ENCODE measurements at regions of chr7 and their contacts with region 1.

Region 1: DNA sequence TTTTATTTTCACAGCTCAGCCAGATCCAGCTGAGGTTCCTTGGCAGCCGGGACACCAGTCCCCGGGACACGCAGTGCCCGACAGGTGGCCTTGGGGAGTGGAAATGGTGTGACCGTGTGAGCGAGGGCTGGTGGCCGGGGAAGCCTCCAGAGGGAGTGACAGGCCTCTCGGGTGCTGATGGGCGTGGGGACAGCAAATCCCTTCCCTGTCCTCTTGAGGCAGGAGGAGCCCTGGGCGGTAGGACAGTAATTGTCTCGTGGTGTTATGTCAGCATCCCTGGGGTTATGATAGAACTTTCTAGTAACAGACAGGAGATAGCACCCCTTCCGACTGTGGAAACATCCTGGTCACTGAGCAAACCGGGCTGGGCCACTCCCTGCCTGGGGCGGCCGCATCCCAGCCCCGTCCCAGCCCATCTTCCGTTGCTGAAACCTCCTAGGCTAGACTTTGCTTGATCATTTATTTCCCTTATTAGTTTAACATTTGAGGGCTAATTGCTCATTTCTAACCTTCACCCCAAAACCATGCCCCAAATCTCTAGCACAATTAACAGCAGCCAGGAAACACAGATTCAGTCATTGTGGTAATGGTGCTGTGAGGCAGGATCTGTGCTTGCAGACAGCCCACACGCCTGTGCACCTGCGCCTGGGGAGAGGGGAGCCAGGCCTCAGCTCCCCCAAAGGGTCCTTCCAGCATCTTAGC is 63.3 kb downstream of the ELFN1 start:
- DNase-seq: no peak
- H3K4me3 ChIP-seq: no peak overlapping the region
- H3K27ac ChIP-seq: no peak overlapping the region
- H3K4me1 ChIP-seq: no peaks in the 10 kb centered on the region
- H3K27me3 ChIP-seq: peaks cover 4% of the 10 kb centered on the region
- CTCF ChIP-seq: no peak

Region 2: GRCh38 chr7:1593091-1593866 is 140.1 kb before region 1 on chr7:
- CTCF ChIA-PET with region 1: no interaction called
- dilution Hi-C with region 1: loop called (anchors 10 kb)
- in situ Hi-C with region 1: no loop called
- intact Hi-C with region 1: no loop called
- DNase-seq: no peak
- H3K4me3 ChIP-seq: no peak overlapping the region
- H3K27ac ChIP-seq: no peak overlapping the region
- H3K4me1 ChIP-seq: no peaks in the 10 kb centered on the region
- H3K27me3 ChIP-seq: no peaks in the 10 kb centered on the region
- CTCF ChIP-seq: peak; percentile 11 to 24

Region 3: GRCh38 chr7:1638215-1638661 is 95.1 kb before region 1 on chr7:
- CTCF ChIA-PET with region 1: no interaction called
- dilution Hi-C with region 1: loop called (anchors 5 kb)
- in situ Hi-C with region 1: no loop called
- intact Hi-C with region 1: no loop called
- DNase-seq: no peak
- H3K4me3 ChIP-seq: no peak overlapping the region
- H3K27ac ChIP-seq: no peak overlapping the region
- H3K4me1 ChIP-seq: no peaks in the 10 kb centered on the region
- H3K27me3 ChIP-seq: no peaks in the 10 kb centered on the region
- CTCF ChIP-seq: no peak

Region 4: DNA sequence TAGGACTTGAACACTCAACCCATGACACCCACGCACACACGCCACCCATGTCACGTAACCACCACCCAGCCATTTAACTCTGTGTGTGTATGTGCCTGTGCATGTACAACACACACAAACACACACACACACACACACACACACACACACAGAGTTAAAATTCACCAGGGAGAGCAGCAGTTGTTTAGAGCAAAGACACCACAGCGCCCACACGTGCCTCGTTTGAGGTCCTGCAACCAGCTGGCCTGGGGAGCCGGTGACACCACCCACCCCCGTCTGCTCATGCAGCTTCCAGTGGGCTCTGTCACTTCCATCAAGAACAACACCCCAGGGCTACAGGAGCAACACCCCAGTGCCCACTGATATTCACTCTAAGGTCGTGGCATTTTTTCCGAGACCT is 34.2 kb after region 1 on chr7:
- CTCF ChIA-PET with region 1: no interaction called
- dilution Hi-C with region 1: no loop called
- in situ Hi-C with region 1: no loop called
- intact Hi-C with region 1: no loop called
- DNase-seq: no peak
- H3K4me3 ChIP-seq: no peak overlapping the region
- H3K27ac ChIP-seq: no peak overlapping the region
- H3K4me1 ChIP-seq: no peaks in the 10 kb centered on the region
- H3K27me3 ChIP-seq: no peaks in the 10 kb centered on the region
- CTCF ChIP-seq: no peak

Measured in mammary epithelial cell (primary cell).